ENCODE measurements at regions of chrX and their contacts with region 1.

Region 1: GRCh38 chrX:13487731-13488523 is 81.5 kb upstream of the EGFL6 start:
- DNase-seq: peak; percentile 84
- H3K4me3 Mint-ChIP-seq: no peak overlapping the region
- H3K27ac Mint-ChIP-seq: peak overlapping the region; percentile 96
- H3K4me1 Mint-ChIP-seq: peaks cover 36% of the 10 kb centered on the region
- H3K27me3 Mint-ChIP-seq: no peaks in the 10 kb centered on the region
- CTCF ChIP-seq: peak; percentile 73

Region 2: GRCh38 chrX:12901486-12901885 is 586.4 kb before region 1 on chrX:
- CTCF ChIA-PET with region 1: interaction called, 4 read pairs
- POLR2A ChIA-PET with region 1: no interaction called
- intact Hi-C with region 1: loop called (anchors 2 kb)
- DNase-seq: peak; percentile 76
- H3K4me3 Mint-ChIP-seq: no peak overlapping the region
- H3K27ac Mint-ChIP-seq: no peak overlapping the region
- H3K4me1 Mint-ChIP-seq: peaks cover 8% of the 10 kb centered on the region
- H3K27me3 Mint-ChIP-seq: peaks cover 54% of the 10 kb centered on the region
- CTCF ChIP-seq: peak; percentile 68

Region 3: GRCh38 chrX:13101441-13102139 is 386.3 kb before region 1 on chrX:
- CTCF ChIA-PET with region 1: interaction called, 3 read pairs
- POLR2A ChIA-PET with region 1: no interaction called
- intact Hi-C with region 1: loop called (anchors 1 kb)
- DNase-seq: peak; percentile 96
- H3K4me3 Mint-ChIP-seq: peak overlapping the region; percentile 11
- H3K27ac Mint-ChIP-seq: peak overlapping the region; percentile 81
- H3K4me1 Mint-ChIP-seq: peaks cover 32% of the 10 kb centered on the region
- H3K27me3 Mint-ChIP-seq: peaks cover 11% of the 10 kb centered on the region
- CTCF ChIP-seq: no peak

Region 4: DNA sequence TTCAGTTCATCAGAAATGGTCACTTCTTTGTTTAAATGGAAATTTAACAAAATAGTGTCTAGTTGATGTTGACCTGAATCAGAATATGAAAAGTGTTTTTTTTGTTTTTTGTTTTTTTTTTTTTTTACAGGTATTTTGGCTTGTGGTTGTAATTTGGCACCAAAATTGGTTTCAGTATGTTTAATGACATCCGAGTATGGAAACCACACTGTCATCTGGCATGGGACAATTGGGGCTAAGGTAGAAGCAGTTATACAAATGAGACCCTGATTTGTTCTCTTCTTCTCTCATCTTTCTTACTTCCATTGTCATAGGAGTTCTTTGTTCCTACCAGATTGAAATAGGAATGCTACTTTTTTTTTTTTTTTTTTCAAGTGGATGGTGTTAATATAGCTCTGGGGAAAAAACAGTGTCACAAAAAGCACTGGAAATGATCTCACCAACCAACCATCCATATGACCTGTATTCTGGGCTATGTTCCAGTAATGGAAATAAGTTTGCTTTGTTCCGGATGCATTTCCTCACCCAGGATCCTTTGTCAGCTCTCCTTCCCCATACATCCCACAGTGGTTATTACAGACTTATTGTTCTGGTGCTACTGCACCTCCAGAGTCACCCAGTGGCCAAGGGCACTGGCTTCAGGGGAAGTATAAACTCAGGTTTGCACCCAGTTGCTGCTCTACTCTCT is 263.9 kb before region 1 on chrX:
- CTCF ChIA-PET with region 1: interaction called, 9 read pairs
- POLR2A ChIA-PET with region 1: no interaction called
- intact Hi-C with region 1: loop called (anchors 1 kb)
- DNase-seq: peak; percentile 95
- H3K4me3 Mint-ChIP-seq: no peak overlapping the region
- H3K27ac Mint-ChIP-seq: peak overlapping the region; percentile 67
- H3K4me1 Mint-ChIP-seq: peaks cover 16% of the 10 kb centered on the region
- H3K27me3 Mint-ChIP-seq: peaks cover 20% of the 10 kb centered on the region
- CTCF ChIP-seq: no peak

Region 5: GRCh38 chrX:13283950-13284914 is 203.7 kb before region 1 on chrX:
- CTCF ChIA-PET with region 1: interaction called, 6 read pairs
- POLR2A ChIA-PET with region 1: no interaction called
- intact Hi-C with region 1: loop called (anchors 5 kb)
- DNase-seq: peak; percentile 69
- H3K4me3 Mint-ChIP-seq: no peak overlapping the region
- H3K27ac Mint-ChIP-seq: peak overlapping the region; percentile 11
- H3K4me1 Mint-ChIP-seq: peaks cover 25% of the 10 kb centered on the region
- H3K27me3 Mint-ChIP-seq: peaks cover 15% of the 10 kb centered on the region
- CTCF ChIP-seq: no peak

Region 6: DNA sequence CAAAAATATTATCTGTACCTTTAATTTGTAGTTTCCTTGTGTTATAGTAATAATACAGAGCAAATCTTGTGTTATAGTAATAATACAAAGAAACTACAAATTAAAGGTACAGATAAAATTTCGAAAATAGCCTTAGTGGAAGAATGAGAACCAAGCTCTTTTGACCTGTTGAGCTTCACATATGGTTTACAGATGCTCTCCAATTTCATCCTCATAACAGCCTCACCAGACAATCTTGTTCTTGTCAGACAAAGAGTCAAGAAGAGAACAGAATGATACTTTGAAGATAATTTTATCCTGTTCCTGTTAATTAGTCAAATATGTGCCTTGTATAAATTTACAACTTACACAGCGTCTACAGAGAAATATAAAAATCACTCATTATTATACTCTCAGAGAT is 180.9 kb before region 1 on chrX:
- CTCF ChIA-PET with region 1: no interaction called
- POLR2A ChIA-PET with region 1: no interaction called
- intact Hi-C with region 1: no loop called
- DNase-seq: no peak
- H3K4me3 Mint-ChIP-seq: no peak overlapping the region
- H3K27ac Mint-ChIP-seq: no peak overlapping the region
- H3K4me1 Mint-ChIP-seq: no peaks in the 10 kb centered on the region
- H3K27me3 Mint-ChIP-seq: peaks cover 28% of the 10 kb centered on the region
- CTCF ChIP-seq: no peak

Region 7: GRCh38 chrX:13322804-13323203 is 165.1 kb before region 1 on chrX:
- CTCF ChIA-PET with region 1: no interaction called
- POLR2A ChIA-PET with region 1: no interaction called
- intact Hi-C with region 1: no loop called
- DNase-seq: no peak
- H3K4me3 Mint-ChIP-seq: no peak overlapping the region
- H3K27ac Mint-ChIP-seq: no peak overlapping the region
- H3K4me1 Mint-ChIP-seq: no peaks in the 10 kb centered on the region
- H3K27me3 Mint-ChIP-seq: peaks cover 30% of the 10 kb centered on the region
- CTCF ChIP-seq: no peak

Region 8: GRCh38 chrX:13398073-13398823 is 89.7 kb before region 1 on chrX:
- CTCF ChIA-PET with region 1: interaction called, 4 read pairs
- POLR2A ChIA-PET with region 1: interaction called, 3 read pairs
- intact Hi-C with region 1: loop called (anchors 1 kb)
- DNase-seq: peak; percentile 98
- H3K4me3 Mint-ChIP-seq: peak overlapping the region; percentile 10
- H3K27ac Mint-ChIP-seq: peak overlapping the region; percentile 83
- H3K4me1 Mint-ChIP-seq: peaks cover 33% of the 10 kb centered on the region
- H3K27me3 Mint-ChIP-seq: peaks cover 11% of the 10 kb centered on the region
- CTCF ChIP-seq: no peak

Region 9: GRCh38 chrX:13646154-13646549 is 158.2 kb after region 1 on chrX:
- CTCF ChIA-PET with region 1: interaction called, 12 read pairs
- POLR2A ChIA-PET with region 1: no interaction called
- intact Hi-C with region 1: no loop called
- DNase-seq: peak; percentile 77
- H3K4me3 Mint-ChIP-seq: no peak overlapping the region
- H3K27ac Mint-ChIP-seq: no peak overlapping the region
- H3K4me1 Mint-ChIP-seq: peaks cover 8% of the 10 kb centered on the region
- H3K27me3 Mint-ChIP-seq: peaks cover 55% of the 10 kb centered on the region
- CTCF ChIP-seq: peak; percentile 54